K562 (cell line): ENCODE measurements at regions of chr1 and their contacts with region 1.

Region 1: DNA sequence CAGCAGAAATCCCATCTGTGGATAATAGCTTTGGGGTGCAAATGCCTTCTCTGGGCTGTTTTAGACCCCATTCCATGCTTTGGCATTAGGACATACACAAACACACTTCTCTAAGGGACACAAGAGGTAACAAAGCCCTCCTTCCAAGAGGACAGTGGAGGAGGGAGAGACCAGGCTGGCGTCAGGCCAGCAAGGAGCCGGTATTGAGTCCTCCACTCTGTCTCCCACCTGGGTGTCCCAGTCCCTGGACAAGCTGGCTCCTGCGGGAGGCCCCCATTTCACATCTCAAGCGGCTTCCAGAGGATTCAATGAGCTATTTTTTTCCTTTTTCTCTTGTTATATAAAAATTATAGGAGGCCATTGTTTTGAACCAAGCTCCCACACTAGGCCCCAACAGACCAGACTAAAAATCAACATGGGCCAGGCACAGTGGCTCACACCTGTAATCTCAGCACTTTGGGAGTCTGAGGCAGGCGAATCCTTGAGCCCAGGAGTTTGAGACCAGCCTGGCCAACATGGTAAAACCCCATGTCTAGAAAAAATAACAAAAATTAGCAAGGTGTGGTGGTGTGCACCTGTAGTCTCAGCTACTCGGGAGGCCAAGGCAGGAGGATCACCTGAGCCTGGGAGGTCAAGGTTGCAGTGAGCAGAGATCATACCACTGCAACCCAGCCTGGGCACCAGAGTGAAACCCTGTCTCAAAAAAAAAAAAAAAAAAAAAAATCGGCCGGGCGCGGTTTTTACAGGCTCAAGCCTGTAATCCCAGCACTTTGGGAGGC is 142.9 kb downstream of the TOMM20 start:
- DNase-seq: no peak
- ATAC-seq: no peak
- H3K4me3 ChIP-seq: no peak overlapping the region
- H3K27ac ChIP-seq: no peak overlapping the region
- H3K4me1 ChIP-seq: peaks cover 24 to 48% of the 10 kb centered on the region in 2 experiments
- H3K27me3 ChIP-seq: no peaks in the 10 kb centered on the region
- CTCF ChIP-seq: no peak
- EP300 ChIP-seq: no peak
- POLR2A ChIP-seq: no peak
- RAD21 ChIP-seq: no peak

Region 2: GRCh38 chr1:235056937-235057336 is 71.2 kb after region 1 on chr1:
- CTCF ChIA-PET with region 1: no interaction called
- POLR2A ChIA-PET with region 1: no interaction called
- in situ Hi-C with region 1: no loop called
- intact Hi-C with region 1: loop called (anchors 2 kb)
- DNase-seq: peak; percentile 53 to 68 (median 56)
- ATAC-seq: peak; percentile 75
- H3K4me3 ChIP-seq: no peak overlapping the region
- H3K27ac ChIP-seq: no peak overlapping the region
- H3K4me1 ChIP-seq: no peaks in the 10 kb centered on the region; a peak in 1 of 5 replicates
- H3K27me3 ChIP-seq: peaks cover 0 to 5% of the 10 kb centered on the region in 2 experiments; a peak in 2 of 5 replicates
- CTCF ChIP-seq: peak; percentile 69 to 82 (median 72)
- EP300 ChIP-seq: no peak
- POLR2A ChIP-seq: no peak
- RAD21 ChIP-seq: peak; percentile 44 to 78